ENCODE measurements at regions of chr14 and their contacts with region 1.

Region 1: DNA sequence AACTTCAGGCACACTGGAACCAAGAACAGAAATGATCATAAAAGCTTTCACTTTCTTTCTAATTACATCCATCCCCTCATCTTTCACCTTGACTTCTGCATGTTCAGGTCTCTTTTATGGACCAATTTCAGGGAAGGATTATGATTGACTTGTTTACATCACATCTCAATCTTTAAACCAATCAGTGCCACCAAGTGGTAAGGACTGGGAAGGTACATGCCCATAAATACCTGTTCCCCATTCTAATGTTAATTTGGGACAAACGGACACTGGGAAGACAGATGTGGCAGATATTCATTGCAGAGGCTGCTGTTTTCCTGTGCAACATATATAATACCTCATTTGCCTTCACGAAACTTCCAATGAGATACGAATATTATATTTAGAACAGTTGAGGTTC is 978.1 kb downstream of the GALC start:
- DNase-seq: no peak
- H3K4me3 Mint-ChIP-seq: no peak overlapping the region
- H3K27ac Mint-ChIP-seq: no peak overlapping the region
- H3K4me1 Mint-ChIP-seq: no peaks in the 10 kb centered on the region
- H3K27me3 Mint-ChIP-seq: no peaks in the 10 kb centered on the region

Region 2: DNA sequence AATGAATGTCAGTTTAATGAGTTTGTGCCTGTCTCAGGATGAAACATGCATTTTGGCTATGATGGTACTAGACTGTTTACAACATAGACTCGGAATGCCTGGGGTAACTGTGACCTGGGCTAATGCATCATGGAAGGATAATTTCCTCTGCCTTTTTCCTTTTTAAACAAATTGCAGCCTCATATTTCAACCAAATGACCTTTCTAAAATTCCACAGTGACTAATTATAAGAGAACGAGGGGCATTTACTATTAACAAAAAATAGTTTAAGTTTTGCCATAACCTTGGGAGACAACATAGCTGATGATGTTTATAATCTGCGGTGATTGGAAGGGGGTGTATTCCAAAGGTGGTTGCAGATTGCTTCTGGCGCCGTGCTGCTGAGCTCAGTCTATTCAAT is 162.3 kb before region 1 on chr14:
- CTCF ChIA-PET with region 1: interaction called, 10 read pairs
- POLR2A ChIA-PET with region 1: no interaction called
- DNase-seq: no peak
- H3K4me3 Mint-ChIP-seq: no peak overlapping the region
- H3K27ac Mint-ChIP-seq: no peak overlapping the region
- H3K4me1 Mint-ChIP-seq: no peaks in the 10 kb centered on the region
- H3K27me3 Mint-ChIP-seq: no peaks in the 10 kb centered on the region

Region 3: DNA sequence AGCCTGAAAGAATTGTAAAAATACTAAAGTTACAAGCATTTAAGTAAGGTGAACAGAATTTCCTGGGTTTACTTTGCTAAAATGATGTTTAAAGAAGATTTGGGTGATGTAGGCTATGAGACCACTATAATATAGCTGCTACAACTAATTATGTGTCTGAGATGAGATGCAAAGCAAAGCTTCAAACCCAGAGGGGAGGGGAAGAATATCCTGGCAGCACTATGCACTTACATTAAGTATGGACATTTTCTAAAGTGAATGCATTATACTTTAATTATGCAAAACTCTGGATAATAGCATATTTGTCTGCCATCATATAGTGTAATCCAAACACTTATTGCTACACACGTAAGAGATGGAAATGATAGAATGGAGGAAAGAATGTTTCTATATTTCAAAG is 25.6 kb before region 1 on chr14:
- CTCF ChIA-PET with region 1: no interaction called
- POLR2A ChIA-PET with region 1: no interaction called
- DNase-seq: no peak
- H3K4me3 Mint-ChIP-seq: no peak overlapping the region
- H3K27ac Mint-ChIP-seq: no peak overlapping the region
- H3K4me1 Mint-ChIP-seq: no peaks in the 10 kb centered on the region
- H3K27me3 Mint-ChIP-seq: no peaks in the 10 kb centered on the region

Region 4: DNA sequence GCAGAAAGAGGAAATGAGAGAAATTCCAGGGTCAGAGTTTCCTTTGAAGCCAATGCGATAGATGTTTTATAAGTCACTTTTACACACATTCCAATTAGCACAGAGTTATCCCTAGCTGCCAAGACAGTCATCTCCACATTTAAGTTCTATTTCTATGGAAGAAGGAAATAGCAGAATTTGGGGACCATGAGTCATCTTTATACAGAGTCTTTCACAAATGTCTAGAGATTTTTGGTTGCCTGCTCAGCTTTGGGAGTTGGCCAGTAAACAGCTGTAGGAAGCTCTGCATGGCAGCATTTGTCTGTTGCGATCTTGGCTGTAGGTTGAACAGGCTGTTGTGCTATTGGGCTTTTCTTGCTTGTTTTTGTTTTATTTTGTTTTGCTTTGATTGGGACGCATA is 93.9 kb after region 1 on chr14:
- CTCF ChIA-PET with region 1: no interaction called
- POLR2A ChIA-PET with region 1: no interaction called
- DNase-seq: no peak
- H3K4me3 Mint-ChIP-seq: no peak overlapping the region
- H3K27ac Mint-ChIP-seq: no peak overlapping the region
- H3K4me1 Mint-ChIP-seq: no peaks in the 10 kb centered on the region
- H3K27me3 Mint-ChIP-seq: no peaks in the 10 kb centered on the region